CD4-positive, alpha-beta memory T cell (primary cell): ENCODE measurements at regions of chr1 and their contacts with region 1.

Region 1: GRCh38 chr1:185104083-185104482 is 52.7 kb downstream of the TRMT1L start:
- DNase-seq: no peak
- H3K4me3 ChIP-seq: no peak overlapping the region
- H3K4me3 Mint-ChIP-seq: no peak overlapping the region
- H3K27ac ChIP-seq: no peak overlapping the region
- H3K27ac Mint-ChIP-seq: no peak overlapping the region
- H3K4me1 ChIP-seq: no peaks in the 10 kb centered on the region
- H3K4me1 Mint-ChIP-seq: peaks cover 0 to 1% (median 0%) of the 10 kb centered on the region in 4 donors
- H3K27me3 ChIP-seq: no peaks in the 10 kb centered on the region
- H3K27me3 Mint-ChIP-seq: no peaks in the 10 kb centered on the region

Region 2: GRCh38 chr1:185050823-185051451 is 53.1 kb before region 1 on chr1:
- CTCF ChIA-PET with region 1: no interaction called
- POLR2A ChIA-PET with region 1: no interaction called
- intact Hi-C with region 1: loop called (anchors 5 kb)
- DNase-seq: no peak
- H3K4me3 ChIP-seq: no peak overlapping the region
- H3K4me3 Mint-ChIP-seq: peak overlapping the region in 1 of 8 donors; percentile 38
- H3K27ac ChIP-seq: no peak overlapping the region
- H3K27ac Mint-ChIP-seq: no peak overlapping the region
- H3K4me1 ChIP-seq: peaks cover 22% of the 10 kb centered on the region
- H3K4me1 Mint-ChIP-seq: peaks cover 43 to 71% (median 53%) of the 10 kb centered on the region in 4 donors
- H3K27me3 ChIP-seq: no peaks in the 10 kb centered on the region
- H3K27me3 Mint-ChIP-seq: no peaks in the 10 kb centered on the region